ENCODE measurements at regions of chr1 and their contacts with region 1.

Region 1: DNA sequence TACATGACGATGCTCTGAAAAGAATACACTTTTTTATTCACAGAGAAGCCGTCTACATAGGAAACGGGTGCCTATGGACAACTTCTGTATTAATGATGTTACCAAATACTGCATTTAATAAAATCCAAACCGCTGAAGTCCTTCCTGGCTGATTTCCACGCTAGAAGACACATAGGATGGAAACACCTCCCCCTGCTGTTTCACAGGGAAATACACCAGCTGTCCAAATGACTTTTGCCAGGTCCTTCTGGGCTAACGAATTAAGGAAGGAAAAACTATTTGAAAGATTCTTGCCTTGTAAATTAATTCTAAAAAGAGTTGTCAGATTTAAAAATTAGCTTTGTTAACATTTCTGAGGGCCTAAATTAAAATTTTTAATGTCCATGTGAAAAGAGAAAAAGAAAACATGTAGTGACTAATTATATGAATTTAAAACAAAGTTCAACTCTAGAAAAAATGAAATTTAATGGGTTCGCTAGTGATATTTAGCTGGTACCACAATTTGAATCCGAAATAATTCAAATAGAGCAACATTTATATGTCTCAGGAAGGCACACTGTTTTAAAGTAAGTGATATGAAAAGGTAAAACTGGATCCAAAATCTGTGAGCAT is 146.0 kb downstream of the RERE start:
- DNase-seq: peak in 5 of 35 experiments; percentile 6 to 64 (median 13)
- ATAC-seq: no peak
- H3K4me3 ChIP-seq: no peak overlapping the region
- H3K4me3 Mint-ChIP-seq: no peak overlapping the region
- H3K27ac ChIP-seq: no peak overlapping the region
- H3K27ac Mint-ChIP-seq: no peak overlapping the region
- H3K4me1 ChIP-seq: peaks cover 0 to 13% of the 10 kb centered on the region in 2 experiments
- H3K4me1 Mint-ChIP-seq: peaks cover 27 to 34% (median 33%) of the 10 kb centered on the region in 3 donors
- H3K27me3 ChIP-seq: no peaks in the 10 kb centered on the region
- H3K27me3 Mint-ChIP-seq: no peaks in the 10 kb centered on the region

Region 2: DNA sequence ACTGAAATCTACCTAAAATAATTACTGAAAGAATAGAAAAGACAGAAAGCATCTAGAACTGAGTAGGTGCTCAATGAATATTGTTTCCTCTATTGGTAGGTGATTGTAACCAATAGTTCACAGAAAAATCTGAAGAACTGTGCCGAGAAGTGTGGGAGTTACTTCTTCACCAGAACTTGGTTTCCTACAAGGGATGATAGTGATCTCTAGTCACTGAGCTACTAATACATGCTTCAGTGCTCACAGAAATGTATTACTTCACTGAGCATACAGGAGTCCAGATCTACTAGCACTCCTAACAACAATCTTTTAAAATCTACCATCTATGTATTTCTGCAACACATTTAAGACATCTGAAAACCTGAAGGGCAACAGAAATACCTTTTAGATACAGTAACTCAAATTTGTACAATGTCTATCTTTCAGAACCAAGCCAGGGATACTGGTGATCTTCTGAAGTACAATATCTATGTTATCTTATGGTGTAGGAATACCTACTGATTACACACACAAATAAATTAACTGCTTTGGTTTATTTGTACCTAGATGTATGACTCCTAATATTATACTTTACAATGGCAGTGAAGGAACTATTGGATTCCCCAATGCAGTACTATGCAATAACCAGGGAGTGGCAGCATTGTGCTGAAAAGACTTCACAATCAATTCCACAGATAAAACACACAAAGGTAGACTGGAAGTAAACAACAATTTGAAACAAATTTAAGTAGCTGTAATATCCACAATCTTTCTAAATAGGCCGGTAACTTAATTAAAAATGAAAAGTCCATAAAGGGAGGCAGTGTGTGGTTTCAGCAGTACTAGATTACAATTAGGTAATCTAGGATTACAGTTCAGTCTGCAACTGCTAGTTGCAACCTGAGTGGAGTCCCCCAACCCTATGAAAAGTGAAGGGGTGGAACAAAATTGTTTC is 110.5 kb before region 1 on chr1:
- CTCF ChIA-PET with region 1: interaction called, 4 to 11 read pairs
- POLR2A ChIA-PET with region 1: no interaction called
- DNase-seq: peak in 22 of 35 experiments; percentile 6 to 74 (median 21)
- ATAC-seq: peak; percentile 44 to 75 (median 70)
- H3K4me3 ChIP-seq: no peak overlapping the region
- H3K4me3 Mint-ChIP-seq: no peak overlapping the region
- H3K27ac ChIP-seq: no peak overlapping the region
- H3K27ac Mint-ChIP-seq: no peak overlapping the region
- H3K4me1 ChIP-seq: peaks cover 0 to 5% of the 10 kb centered on the region in 2 experiments
- H3K4me1 Mint-ChIP-seq: peaks cover 7 to 16% (median 12%) of the 10 kb centered on the region in 3 donors
- H3K27me3 ChIP-seq: no peaks in the 10 kb centered on the region
- H3K27me3 Mint-ChIP-seq: no peaks in the 10 kb centered on the region

Region 3: GRCh38 chr1:8641377-8641997 is 29.9 kb before region 1 on chr1:
- CTCF ChIA-PET with region 1: no interaction called
- POLR2A ChIA-PET with region 1: interaction called in 1 of 2 experiments, 10 read pairs
- DNase-seq: no peak
- ATAC-seq: no peak
- H3K4me3 ChIP-seq: no peak overlapping the region
- H3K4me3 Mint-ChIP-seq: no peak overlapping the region
- H3K27ac ChIP-seq: no peak overlapping the region
- H3K27ac Mint-ChIP-seq: no peak overlapping the region
- H3K4me1 ChIP-seq: peaks cover 0 to 2% of the 10 kb centered on the region in 2 experiments
- H3K4me1 Mint-ChIP-seq: peaks cover 0 to 8% (median 4%) of the 10 kb centered on the region in 3 donors
- H3K27me3 ChIP-seq: no peaks in the 10 kb centered on the region
- H3K27me3 Mint-ChIP-seq: no peaks in the 10 kb centered on the region

Region 4: GRCh38 chr1:9671377-9672140 is 1000.1 kb after region 1 on chr1:
- CTCF ChIA-PET with region 1: no interaction called
- POLR2A ChIA-PET with region 1: interaction called in 1 of 2 experiments, 11 read pairs
- DNase-seq: no peak
- ATAC-seq: peak in 2 of 4 experiments; percentile 53 to 63
- H3K4me3 ChIP-seq: no peak overlapping the region
- H3K4me3 Mint-ChIP-seq: peak overlapping the region in 1 of 3 donors; percentile 28
- H3K27ac ChIP-seq: no peak overlapping the region
- H3K27ac Mint-ChIP-seq: peak overlapping the region; percentile 51 to 76
- H3K4me1 ChIP-seq: peaks cover 0 to 82% of the 10 kb centered on the region in 2 experiments
- H3K4me1 Mint-ChIP-seq: peaks cover 66 to 76% (median 73%) of the 10 kb centered on the region in 3 donors
- H3K27me3 ChIP-seq: no peaks in the 10 kb centered on the region
- H3K27me3 Mint-ChIP-seq: no peaks in the 10 kb centered on the region